HAP-1 (cell line): ENCODE measurements at regions of chr3 and their contacts with region 1.

Region 1: DNA sequence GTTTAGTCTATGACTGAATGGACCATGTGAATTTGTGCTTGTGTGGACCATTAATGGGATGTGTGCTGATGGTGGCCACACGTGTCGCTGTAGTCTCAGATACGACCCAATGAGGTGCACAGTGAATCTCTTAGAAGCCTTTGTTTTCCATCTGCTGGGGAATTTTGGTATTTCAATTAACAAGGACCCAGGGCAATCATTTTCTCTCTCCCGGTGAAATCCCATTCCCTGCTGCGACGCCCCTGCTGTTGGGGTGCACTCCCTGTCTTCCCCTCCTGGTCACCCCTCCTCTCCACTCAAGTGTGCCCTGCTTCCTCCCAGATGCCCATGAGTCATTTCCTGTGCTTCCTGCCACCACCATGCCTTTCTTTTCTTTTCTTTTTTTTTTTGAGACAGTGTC is 32.7 kb downstream of the EBLN2 start:
- DNase-seq: peak; percentile 57 to 59
- H3K4me3 ChIP-seq: no peak overlapping the region
- H3K4me1 ChIP-seq: no peaks in the 10 kb centered on the region
- H3K27me3 ChIP-seq: no peaks in the 10 kb centered on the region

Region 2: DNA sequence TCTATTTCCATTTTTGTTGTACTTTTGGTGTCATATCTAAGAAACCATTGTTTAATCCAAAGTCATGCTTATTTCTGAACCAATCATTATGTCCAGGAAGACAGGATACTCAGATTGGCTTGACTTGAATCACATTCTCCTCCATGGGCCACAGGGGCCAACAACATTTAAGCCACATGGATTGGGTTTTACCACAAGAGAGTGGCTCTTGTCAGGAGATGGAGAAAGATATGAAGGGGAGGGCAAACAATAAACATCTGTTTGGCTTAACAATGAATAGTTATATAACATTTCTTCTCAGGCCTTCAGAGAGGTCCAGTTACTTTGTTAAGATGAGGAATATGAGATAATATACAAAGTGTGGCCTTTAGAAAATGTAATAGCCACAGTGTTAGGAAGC is 161.7 kb before region 1 on chr3:
- in situ Hi-C with region 1: no loop called
- DNase-seq: no peak
- H3K4me3 ChIP-seq: no peak overlapping the region
- H3K4me1 ChIP-seq: no peaks in the 10 kb centered on the region
- H3K27me3 ChIP-seq: peaks cover 6% of the 10 kb centered on the region

Region 3: GRCh38 chr3:73432023-73432705 is 338.0 kb after region 1 on chr3:
- in situ Hi-C with region 1: loop called (anchors 10 kb)
- DNase-seq: peak; percentile 47 to 51
- H3K4me3 ChIP-seq: no peak overlapping the region
- H3K4me1 ChIP-seq: 0 out of 2 replicates have a peak, but pooled peaks cover 2% of the 10 kb centered on the region
- H3K27me3 ChIP-seq: peaks cover 4% of the 10 kb centered on the region

Region 4: GRCh38 chr3:73502609-73503583 is 408.8 kb after region 1 on chr3:
- in situ Hi-C with region 1: loop called (anchors 5 kb)
- DNase-seq: peak; percentile 79
- H3K4me3 ChIP-seq: no peak overlapping the region
- H3K4me1 ChIP-seq: no peaks in the 10 kb centered on the region
- H3K27me3 ChIP-seq: no peaks in the 10 kb centered on the region